Gastrocnemius medialis (tissue), 4 donors: ENCODE measurements at regions of chr4 and their contacts with region 1.

Region 1: GRCh38 chr4:87732033-87732765 is 67.2 kb upstream of the IBSP start:
- DNase-seq: no peak
- ATAC-seq: peak in 1 of 2 donors; percentile 68
- H3K4me3 ChIP-seq: no peak overlapping the region
- H3K27ac ChIP-seq: no peak overlapping the region
- H3K4me1 ChIP-seq: no peaks in the 10 kb centered on the region
- H3K27me3 ChIP-seq: no peaks in the 10 kb centered on the region
- CTCF ChIP-seq: no peak
- POLR2A ChIP-seq: no peak

Region 2: DNA sequence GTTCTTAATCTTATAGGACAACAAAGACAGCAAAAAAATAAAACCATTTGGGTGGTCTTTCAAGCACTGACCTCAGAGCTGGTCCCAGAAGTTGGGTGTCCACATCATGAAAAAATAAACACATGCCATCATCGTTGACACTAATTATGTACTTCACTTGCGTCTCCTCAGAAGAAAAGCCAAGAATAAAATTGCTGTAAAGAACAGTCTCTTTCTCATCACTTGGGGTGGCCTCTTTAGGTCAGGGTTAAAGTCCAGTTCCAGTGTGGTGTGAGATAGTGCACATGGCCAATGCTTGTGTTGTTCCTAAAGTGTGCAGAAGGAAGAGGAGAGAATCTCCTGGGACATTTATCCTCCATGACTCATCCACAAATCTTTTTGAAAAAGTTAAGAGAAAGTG is 17.7 kb after region 1 on chr4:
- in situ Hi-C with region 1: no loop called
- intact Hi-C with region 1: loop called (anchors 1 kb)
- DNase-seq: no peak
- ATAC-seq: peak in 1 of 2 donors; percentile 30
- H3K4me3 ChIP-seq: no peak overlapping the region
- H3K27ac ChIP-seq: no peak overlapping the region
- H3K4me1 ChIP-seq: no peaks in the 10 kb centered on the region
- H3K27me3 ChIP-seq: no peaks in the 10 kb centered on the region
- CTCF ChIP-seq: no peak
- POLR2A ChIP-seq: no peak

Region 3: DNA sequence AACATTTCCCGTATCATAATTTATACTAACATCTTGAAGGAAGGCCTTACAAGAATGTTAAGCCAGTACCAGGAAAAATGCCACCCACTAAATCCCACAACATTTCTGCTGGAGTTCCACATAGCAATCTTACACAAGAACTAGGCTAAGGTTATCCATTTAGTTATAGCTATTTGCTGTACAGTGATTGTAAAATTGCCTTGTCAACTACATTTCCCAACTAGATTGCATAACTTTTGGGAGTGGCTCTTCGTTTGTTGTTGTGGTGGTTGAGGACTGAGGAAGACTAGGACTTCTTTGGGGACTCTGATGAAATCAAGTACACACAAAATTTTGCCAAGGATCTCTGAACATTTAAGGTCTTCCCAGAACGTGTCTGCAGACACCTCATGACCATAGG is 75.2 kb after region 1 on chr4:
- in situ Hi-C with region 1: no loop called
- intact Hi-C with region 1: no loop called
- DNase-seq: no peak
- ATAC-seq: peak; percentile 54 to 69
- H3K4me3 ChIP-seq: no peak overlapping the region
- H3K27ac ChIP-seq: no peak overlapping the region
- H3K4me1 ChIP-seq: no peaks in the 10 kb centered on the region
- H3K27me3 ChIP-seq: no peaks in the 10 kb centered on the region
- CTCF ChIP-seq: no peak
- POLR2A ChIP-seq: no peak